Activated CD4-positive, alpha-beta memory T cell treated with anti-CD3 and anti-CD28 coated beads, Interleukin-2, amount 10 ng/mL, durations not matched to agents 7 days and 5 days (primary cell): ENCODE measurements at regions of chr17 and their contacts with region 1.

Region 1: GRCh38 chr17:76182016-76182764 is 41.1 kb upstream of the FOXJ1 start:
- DNase-seq: peak; percentile 96
- H3K4me3 Mint-ChIP-seq: peak overlapping the region; percentile 47
- H3K27ac Mint-ChIP-seq: peak overlapping the region; percentile 95
- H3K4me1 Mint-ChIP-seq: peaks cover 61% of the 10 kb centered on the region
- H3K27me3 Mint-ChIP-seq: no peaks in the 10 kb centered on the region

Region 2: DNA sequence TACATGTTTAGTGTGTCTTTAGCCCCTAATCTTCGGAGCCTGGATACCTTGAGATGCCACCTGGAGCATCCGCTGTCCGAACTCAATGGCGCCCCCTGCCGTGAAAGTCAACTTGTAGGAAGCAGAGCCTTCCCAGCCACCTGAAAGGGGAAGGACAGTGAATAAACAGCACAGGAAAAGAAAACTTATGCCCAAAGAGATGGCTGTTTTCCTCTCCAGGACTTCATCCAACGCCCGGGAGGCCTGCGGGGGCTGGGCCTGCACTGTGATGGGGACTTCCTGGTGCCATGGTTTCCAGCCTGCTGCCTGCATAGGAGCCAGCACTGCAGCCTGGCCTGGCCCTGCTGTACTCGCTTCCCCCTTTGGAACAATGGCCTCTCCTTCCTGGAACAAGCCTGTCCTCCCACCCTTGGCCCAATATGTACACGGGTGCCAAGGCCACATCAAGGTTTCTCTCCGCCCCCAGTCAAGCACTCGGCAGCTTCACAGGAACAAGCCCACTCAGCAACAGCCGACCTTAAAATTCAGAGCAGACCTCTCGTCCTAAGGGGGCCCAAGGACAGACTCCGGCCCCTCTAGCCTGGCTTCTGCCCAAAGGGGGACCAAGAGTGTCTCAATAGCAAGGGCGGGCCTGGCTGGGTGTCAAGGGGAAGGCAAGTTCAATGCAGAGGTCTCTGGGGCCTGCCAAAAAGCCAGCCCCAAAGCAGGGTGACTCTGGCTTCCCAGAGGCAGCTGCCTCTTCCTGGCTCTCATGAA is 333.5 kb before region 1 on chr17:
- CTCF ChIA-PET with region 1: no interaction called
- POLR2A ChIA-PET with region 1: no interaction called
- DNase-seq: peak; percentile 83
- H3K4me3 Mint-ChIP-seq: no peak overlapping the region
- H3K27ac Mint-ChIP-seq: peak overlapping the region; percentile 54
- H3K4me1 Mint-ChIP-seq: peaks cover 37% of the 10 kb centered on the region
- H3K27me3 Mint-ChIP-seq: no peaks in the 10 kb centered on the region

Region 3: GRCh38 chr17:76121932-76122430 is 60.2 kb before region 1 on chr17:
- CTCF ChIA-PET with region 1: interaction called, 56 read pairs
- POLR2A ChIA-PET with region 1: interaction called, 9 read pairs
- DNase-seq: no peak
- H3K4me3 Mint-ChIP-seq: no peak overlapping the region
- H3K27ac Mint-ChIP-seq: peak overlapping the region; percentile 60
- H3K4me1 Mint-ChIP-seq: peaks cover 20% of the 10 kb centered on the region
- H3K27me3 Mint-ChIP-seq: no peaks in the 10 kb centered on the region

Region 4: GRCh38 chr17:76147211-76148014 is 34.8 kb before region 1 on chr17:
- CTCF ChIA-PET with region 1: interaction called, 47 read pairs
- POLR2A ChIA-PET with region 1: interaction called, 28 read pairs
- DNase-seq: no peak
- H3K4me3 Mint-ChIP-seq: no peak overlapping the region
- H3K27ac Mint-ChIP-seq: peak overlapping the region; percentile 56
- H3K4me1 Mint-ChIP-seq: peaks cover 68% of the 10 kb centered on the region
- H3K27me3 Mint-ChIP-seq: no peaks in the 10 kb centered on the region

Region 5: DNA sequence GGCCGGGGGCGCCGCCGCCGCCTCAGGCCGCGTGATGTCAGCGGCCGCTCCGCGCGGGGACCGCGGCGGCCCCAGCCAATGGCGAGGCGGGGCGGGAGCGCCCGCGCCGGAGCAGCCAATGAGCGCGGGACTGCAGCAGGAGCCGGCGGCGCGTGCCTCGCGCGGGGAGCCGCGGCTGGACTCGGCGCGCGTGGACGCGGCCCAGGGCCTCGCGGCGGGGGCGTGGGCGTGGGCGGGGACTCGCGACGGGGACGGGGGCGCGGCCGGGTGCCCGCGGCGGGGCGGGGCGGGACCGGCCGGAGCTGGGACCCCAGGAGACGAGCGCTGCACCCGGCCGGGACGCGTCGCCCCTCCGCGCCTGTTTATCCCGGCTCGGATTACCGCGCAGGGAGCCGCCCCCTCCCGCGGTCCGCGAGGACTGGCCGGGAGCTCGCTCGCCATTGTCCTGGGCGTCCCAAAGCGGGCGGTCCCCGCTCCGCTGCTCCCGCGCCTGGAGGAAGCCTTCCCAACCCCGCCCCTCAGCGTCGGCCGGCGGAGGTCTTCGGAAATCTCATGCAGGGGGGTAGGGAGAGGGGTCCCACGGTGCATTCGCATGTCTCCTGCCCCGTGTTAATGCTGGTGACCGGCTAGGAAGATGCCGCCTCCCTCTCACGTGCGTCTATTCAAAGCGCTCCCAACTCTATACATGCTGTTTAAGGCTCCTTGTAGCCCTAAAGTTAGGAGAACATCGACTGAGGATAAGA is 58.4 kb after region 1 on chr17 and contains the start of gene RNF157:
- CTCF ChIA-PET with region 1: interaction called, 11 read pairs
- POLR2A ChIA-PET with region 1: interaction called, 39 read pairs
- DNase-seq: peak; percentile 73
- H3K4me3 Mint-ChIP-seq: peak within 1 kb of the TSS; percentile 81
- H3K27ac Mint-ChIP-seq: peak within 1 kb of the TSS; percentile 85
- H3K4me1 Mint-ChIP-seq: peaks cover 74% of the 10 kb centered on the region
- H3K27me3 Mint-ChIP-seq: peaks cover 7% of the 10 kb centered on the region
- total RNA-seq, gene RNF157: 79.8 to 83.9 TPM

Region 6: GRCh38 chr17:76271669-76272540 is 89.7 kb after region 1 on chr17:
- CTCF ChIA-PET with region 1: interaction called, 22 read pairs
- POLR2A ChIA-PET with region 1: interaction called, 1,244 read pairs
- DNase-seq: peak; percentile 80
- H3K4me3 Mint-ChIP-seq: peak overlapping the region; percentile 73
- H3K27ac Mint-ChIP-seq: peak overlapping the region; percentile 93
- H3K4me1 Mint-ChIP-seq: peaks cover 61% of the 10 kb centered on the region
- H3K27me3 Mint-ChIP-seq: no peaks in the 10 kb centered on the region

Region 7: DNA sequence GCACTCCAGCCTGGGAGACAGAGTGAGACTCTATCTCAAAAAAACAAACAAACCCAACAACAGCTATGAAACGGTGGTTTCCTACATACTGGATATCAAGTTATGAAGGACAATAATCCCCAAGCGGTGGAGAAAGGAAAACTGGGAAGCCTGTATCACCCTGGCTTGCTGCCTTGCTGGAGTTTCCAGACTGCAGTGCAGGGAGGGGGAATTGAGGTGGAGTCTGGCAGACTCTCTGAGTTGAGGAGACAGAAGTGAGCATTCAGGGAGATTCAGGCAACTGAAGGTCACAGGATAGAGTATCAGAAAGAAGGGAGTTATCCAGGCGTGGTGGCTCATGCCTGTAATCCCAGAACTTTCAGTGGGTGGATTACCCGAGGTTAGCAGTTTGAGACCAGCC is 114.0 kb after region 1 on chr17:
- CTCF ChIA-PET with region 1: interaction called, 11 read pairs
- POLR2A ChIA-PET with region 1: no interaction called
- DNase-seq: no peak
- H3K4me3 Mint-ChIP-seq: no peak overlapping the region
- H3K27ac Mint-ChIP-seq: no peak overlapping the region
- H3K4me1 Mint-ChIP-seq: peaks cover 3% of the 10 kb centered on the region
- H3K27me3 Mint-ChIP-seq: no peaks in the 10 kb centered on the region